Dorsolateral prefrontal cortex (tissue), 120 donors: ENCODE measurements at regions of chr13 and their contacts with region 1.

Region 1: DNA sequence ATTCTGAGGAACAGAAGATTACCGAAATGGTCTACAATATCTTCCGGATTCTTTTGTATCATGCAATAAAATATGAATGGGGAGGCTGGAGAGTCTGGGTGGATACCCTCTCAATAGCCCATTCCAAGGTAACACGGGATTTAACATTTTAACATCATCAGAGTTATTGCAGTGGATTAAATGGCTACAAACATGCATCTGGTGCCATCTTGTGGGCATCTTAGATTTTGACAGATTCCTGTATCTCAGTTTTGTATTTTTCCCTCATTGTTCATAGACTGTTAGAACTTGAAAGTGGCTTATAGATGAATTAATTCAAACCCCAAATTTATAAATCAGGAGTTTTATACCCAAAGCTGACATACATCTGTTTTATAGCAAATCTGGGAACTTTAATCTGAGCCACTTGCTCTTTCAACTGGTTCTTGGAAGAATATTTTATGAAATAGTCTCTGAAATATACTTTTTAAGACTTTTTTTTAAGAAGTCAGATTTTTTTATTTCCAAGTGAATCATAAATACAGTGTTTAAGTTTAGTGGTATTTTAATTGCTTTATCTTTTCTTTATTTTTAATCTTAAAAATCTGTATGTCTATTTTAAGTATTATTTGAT is 215.2 kb downstream of the NBEA start:
- DNase-seq: peak in 1 of 10 donors; percentile 29
- H3K4me3 ChIP-seq: no peak overlapping the region
- H3K27ac ChIP-seq: peak overlapping the region in 5 of 59 donors; percentile 7 to 24 (median 11)
- H3K27me3 ChIP-seq: no peaks in the 10 kb centered on the region
- CTCF ChIP-seq: peak; percentile 44 to 88 (median 73)

Region 2: GRCh38 chr13:33799950-33800592 is 1357.2 kb before region 1 on chr13:
- intact Hi-C with region 1: loop called (anchors 10 kb)
- DNase-seq: no peak
- H3K4me3 ChIP-seq: peak overlapping the region in 12 of 59 donors; percentile 0 to 32 (median 14)
- H3K27ac ChIP-seq: peak overlapping the region in 21 of 59 donors; percentile 1 to 55 (median 25)
- H3K27me3 ChIP-seq: no peaks in the 10 kb centered on the region
- CTCF ChIP-seq: peak in 55 of 56 donors; percentile 20 to 72 (median 51)

Region 3: DNA sequence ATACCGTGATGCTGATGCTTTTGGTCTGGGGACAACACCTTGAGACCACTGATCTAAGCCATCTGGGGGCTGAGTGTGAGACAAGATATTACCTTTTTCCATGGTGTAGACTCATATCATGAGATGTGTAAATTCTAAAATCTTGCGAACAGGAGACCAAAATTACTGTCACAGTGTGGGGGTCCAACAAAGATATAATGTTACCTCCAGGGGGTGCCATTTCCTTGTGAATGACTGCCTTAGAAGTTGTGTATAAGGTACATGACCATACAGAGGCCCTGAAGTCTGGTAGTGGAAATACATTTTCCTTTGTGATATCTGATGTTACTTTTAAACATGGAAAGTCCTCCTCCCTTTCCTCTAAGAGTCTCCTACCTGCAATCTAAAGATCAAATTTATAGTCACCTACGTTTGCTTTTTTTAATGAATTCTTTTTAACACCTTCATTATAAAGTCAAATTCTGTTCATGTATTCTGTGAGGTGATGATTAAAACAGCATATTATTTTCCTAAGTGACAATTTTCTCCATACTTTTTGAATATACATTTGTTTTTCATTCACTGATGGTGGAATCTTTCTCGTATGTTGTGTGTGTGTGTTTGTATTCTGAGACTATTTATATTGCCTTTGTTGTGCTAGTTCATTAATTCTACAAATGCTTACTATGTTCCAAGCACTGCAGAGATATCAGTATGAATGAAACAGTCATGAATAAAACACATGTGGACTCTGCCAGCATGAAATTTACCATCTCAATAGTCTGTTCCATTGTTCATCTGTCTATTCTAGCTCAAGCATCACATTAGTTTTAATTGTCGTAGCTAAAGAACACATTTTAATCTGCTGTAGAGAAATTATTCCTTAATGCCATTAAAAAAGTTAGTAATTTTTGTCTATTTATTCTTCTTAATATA is 1225.6 kb before region 1 on chr13:
- intact Hi-C with region 1: loop called (anchors 5 kb)
- DNase-seq: peak in 1 of 10 donors; percentile 23
- H3K4me3 ChIP-seq: no peak overlapping the region
- H3K27ac ChIP-seq: no peak overlapping the region
- H3K27me3 ChIP-seq: no peaks in the 10 kb centered on the region
- CTCF ChIP-seq: peak; percentile 10 to 72 (median 52)

Region 4: GRCh38 chr13:34762312-34762711 is 394.9 kb before region 1 on chr13:
- intact Hi-C with region 1: no loop called
- DNase-seq: no peak
- H3K4me3 ChIP-seq: no peak overlapping the region
- H3K27ac ChIP-seq: no peak overlapping the region
- H3K27me3 ChIP-seq: no peaks in the 10 kb centered on the region
- CTCF ChIP-seq: no peak

Region 5: DNA sequence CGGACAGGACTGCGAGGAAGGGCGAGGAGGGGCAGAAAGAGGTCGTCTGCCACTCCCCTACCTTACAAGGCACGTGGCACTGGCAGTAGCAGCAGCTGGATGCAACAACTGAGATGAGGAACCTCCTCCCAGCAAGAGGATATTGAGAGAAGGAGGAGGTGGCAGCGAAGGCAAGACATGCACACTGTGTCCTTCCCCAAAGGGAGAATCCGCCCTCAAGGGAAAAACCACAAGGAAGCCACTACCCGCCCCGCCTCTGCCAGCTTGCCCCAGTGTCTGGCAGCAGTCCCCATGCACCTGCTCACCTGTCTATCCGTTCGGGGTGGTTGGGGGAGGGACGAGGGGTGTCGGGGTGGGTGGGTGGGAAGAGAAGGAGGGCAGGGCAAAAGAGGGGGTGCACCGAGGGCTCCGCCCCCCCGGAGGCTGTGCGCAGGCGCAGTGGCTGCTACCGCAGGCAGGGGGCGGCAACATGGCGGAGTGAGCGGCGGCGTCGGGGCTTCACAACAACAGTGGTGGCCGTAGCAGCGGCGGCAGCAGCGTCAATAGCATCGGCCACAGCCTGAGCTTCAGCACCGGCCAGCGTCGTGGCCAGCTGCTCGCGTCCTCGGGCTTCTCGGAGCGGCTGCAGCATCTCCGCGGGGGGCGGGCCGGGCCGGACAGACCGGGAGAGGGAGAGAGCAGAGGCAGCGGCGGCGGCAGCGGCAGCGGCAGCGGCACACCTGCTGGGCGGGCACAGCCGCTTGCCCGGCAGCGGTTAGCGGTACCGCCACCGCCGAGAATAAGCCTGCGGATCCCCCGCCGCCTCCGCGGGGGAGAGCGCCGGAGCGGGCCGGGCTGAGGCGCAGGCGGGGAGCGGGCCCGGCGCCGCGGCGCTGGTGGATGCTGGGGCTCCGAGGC is 215.2 kb before region 1 on chr13 and contains the start of gene NBEA:
- intact Hi-C with region 1: loop called in 1 of 2 experiments (anchors 5 kb)
- DNase-seq: peak; percentile 61 to 89 (median 77)
- H3K4me3 ChIP-seq: peak within 1 kb of the TSS; percentile 63 to 95 (median 86)
- H3K27ac ChIP-seq: peak within 1 kb of the TSS in 58 of 59 donors; percentile 25 to 95 (median 85)
- H3K27me3 ChIP-seq: no peaks in the 10 kb centered on the region
- CTCF ChIP-seq: peak in 51 of 56 donors; percentile 13 to 70 (median 48)
- total RNA-seq, gene NBEA: 41.1 to 110 (median 86.2) TPM